IMR-90 (cell line): ENCODE measurements at regions of chr7 and their contacts with region 1.

Region 1: GRCh38 chr7:130393101-130393561 is 12.8 kb downstream of the CPA1 start:
- DNase-seq: peak; percentile 80
- ATAC-seq: peak; percentile 78
- H3K4me3 ChIP-seq: no peak overlapping the region
- H3K27ac ChIP-seq: peak overlapping the region; percentile 25; the same call in 1 of the 2 replicates
- H3K4me1 ChIP-seq: peaks cover 6% of the 10 kb centered on the region
- H3K27me3 ChIP-seq: no peaks in the 10 kb centered on the region
- CTCF ChIP-seq: no peak
- POLR2A ChIP-seq: no peak
- RAD21 ChIP-seq: no peak

Region 2: GRCh38 chr7:130352221-130353075 is 40.7 kb before region 1 on chr7:
- CTCF ChIA-PET with region 1: no interaction called
- POLR2A ChIA-PET with region 1: no interaction called
- dilution Hi-C with region 1: no loop called
- in situ Hi-C with region 1: no loop called
- intact Hi-C with region 1: no loop called
- DNase-seq: peak; percentile 75
- ATAC-seq: no peak
- H3K4me3 ChIP-seq: no peak overlapping the region
- H3K27ac ChIP-seq: peak overlapping the region; percentile 89
- H3K4me1 ChIP-seq: peaks cover 29% of the 10 kb centered on the region
- H3K27me3 ChIP-seq: no peaks in the 10 kb centered on the region
- CTCF ChIP-seq: no peak
- POLR2A ChIP-seq: no peak
- RAD21 ChIP-seq: no peak

Region 3: DNA sequence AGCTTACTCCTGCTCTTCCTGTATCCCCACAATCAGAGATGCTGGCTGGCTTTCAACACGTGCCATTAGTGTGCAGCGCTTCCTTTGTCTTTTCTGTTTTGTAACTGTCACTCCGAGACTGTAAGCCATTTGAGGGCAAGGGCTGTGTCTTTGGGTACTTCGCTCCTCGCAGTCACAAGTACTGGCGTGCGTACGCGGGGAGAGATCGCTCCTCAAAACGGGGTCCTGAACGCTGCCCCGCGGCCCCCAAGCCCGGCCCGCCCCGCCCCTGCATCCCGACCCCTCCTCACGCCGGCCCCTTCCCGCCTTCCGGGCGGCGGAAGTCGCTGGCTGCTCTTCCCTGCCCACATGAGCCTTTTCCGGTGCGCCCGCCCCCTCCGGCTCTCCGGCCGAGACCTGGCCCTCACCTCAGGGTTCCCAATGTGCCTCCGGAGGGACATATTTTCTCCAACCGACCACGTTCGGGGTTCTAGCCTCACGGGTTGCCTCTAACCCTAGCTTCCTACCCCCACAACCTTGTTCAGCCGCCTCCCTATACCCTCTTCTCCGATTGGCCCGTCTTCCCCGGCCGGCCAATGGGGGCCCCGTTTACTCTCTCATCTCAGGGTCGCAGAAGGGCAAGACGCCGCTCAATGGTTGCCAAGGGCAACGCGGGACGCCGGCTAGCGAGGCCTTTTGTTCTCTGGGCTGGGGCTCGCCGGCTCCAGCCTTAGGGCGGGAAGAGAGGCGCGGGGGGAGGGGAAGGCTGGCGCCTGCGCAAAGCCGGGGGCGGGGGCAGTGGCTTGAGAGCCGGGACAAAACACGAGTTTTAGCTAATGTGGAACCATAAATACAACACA is 47.6 kb after region 1 on chr7 and contains the start of gene CEP41:
- CTCF ChIA-PET with region 1: no interaction called
- POLR2A ChIA-PET with region 1: no interaction called
- dilution Hi-C with region 1: no loop called
- in situ Hi-C with region 1: no loop called
- intact Hi-C with region 1: no loop called
- DNase-seq: peak; percentile 96
- ATAC-seq: peak; percentile 99
- H3K4me3 ChIP-seq: peak within 1 kb of the TSS; percentile 72
- H3K27ac ChIP-seq: peak within 1 kb of the TSS; percentile 99
- H3K4me1 ChIP-seq: peaks cover 6% of the 10 kb centered on the region
- H3K27me3 ChIP-seq: no peaks in the 10 kb centered on the region
- CTCF ChIP-seq: no peak
- POLR2A ChIP-seq: no peak
- RAD21 ChIP-seq: no peak
- total RNA-seq, gene CEP41: 11.1 and 12.2 TPM in 2 replicates

Region 4: DNA sequence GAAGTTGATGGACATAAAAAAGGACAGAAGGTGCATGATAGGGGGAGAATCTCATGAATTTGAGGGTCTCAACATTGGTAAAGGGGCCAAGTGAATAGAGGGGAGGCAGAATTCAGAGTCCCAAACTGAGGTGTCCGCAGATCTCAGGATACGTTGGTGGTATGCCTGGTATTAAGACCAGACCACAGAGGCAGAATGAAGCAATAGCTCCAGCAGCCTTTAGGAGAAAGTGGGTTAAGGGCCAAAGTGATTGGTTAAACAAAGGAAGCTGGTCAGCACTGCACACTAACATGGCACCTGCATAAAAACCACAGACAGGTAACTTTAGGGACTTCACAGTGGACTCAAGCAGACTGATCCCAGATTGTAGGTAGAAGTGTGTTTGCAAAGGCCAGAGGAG is 136.3 kb after region 1 on chr7:
- CTCF ChIA-PET with region 1: no interaction called
- POLR2A ChIA-PET with region 1: interaction called, 14 read pairs
- dilution Hi-C with region 1: no loop called
- in situ Hi-C with region 1: no loop called
- intact Hi-C with region 1: no loop called
- DNase-seq: no peak
- ATAC-seq: no peak
- H3K4me3 ChIP-seq: no peak overlapping the region
- H3K27ac ChIP-seq: no peak overlapping the region
- H3K4me1 ChIP-seq: no peaks in the 10 kb centered on the region
- H3K27me3 ChIP-seq: no peaks in the 10 kb centered on the region
- CTCF ChIP-seq: no peak
- POLR2A ChIP-seq: no peak
- RAD21 ChIP-seq: no peak

Region 5: DNA sequence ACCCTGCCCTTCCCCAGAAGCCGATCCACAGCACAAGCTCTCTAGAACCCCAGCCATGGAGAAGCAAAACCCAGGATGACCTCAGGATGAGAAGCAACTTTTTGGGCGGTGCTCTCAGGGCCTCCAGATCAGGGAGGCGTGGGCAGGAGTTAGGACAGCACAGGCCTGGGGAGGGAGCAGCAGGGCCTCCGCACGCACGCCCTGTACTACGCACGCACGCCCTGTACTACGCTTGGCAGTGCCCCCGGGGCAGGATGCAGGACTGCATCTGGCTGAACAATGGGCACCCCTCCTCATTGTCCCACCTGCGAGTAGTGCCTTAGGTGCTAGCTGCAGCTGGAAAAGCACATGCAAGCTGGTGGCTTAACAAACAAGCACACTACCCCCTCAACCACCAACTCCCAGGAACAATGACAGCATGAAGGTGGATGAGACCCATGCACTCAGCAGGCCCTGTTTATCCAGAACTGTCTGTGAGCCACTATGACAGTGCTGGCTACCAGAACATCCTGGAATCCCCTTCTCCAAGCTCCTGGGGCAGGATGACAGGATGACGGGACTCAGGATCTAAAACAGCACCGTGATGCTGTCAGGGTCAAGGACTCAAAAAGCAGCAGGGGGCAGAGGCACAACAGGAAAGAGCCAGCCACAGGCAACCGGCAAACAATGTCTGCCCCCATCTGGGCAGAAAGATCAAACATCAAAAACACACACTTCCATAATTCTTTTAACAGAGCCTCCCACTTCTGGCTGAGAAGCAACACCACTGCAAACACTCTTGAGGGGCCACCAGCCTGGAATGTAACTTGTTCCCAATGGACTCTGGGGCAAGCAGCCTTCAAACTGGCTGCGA is 1151.5 kb after region 1 on chr7:
- CTCF ChIA-PET with region 1: no interaction called
- POLR2A ChIA-PET with region 1: no interaction called
- dilution Hi-C with region 1: no loop called
- in situ Hi-C with region 1: no loop called
- intact Hi-C with region 1: no loop called
- DNase-seq: peak; percentile 35
- ATAC-seq: peak; percentile 48; the same call in 1 of the 2 replicates
- H3K4me3 ChIP-seq: no peak overlapping the region
- H3K27ac ChIP-seq: no peak overlapping the region
- H3K4me1 ChIP-seq: no peaks in the 10 kb centered on the region
- H3K27me3 ChIP-seq: no peaks in the 10 kb centered on the region
- CTCF ChIP-seq: peak; percentile 51
- POLR2A ChIP-seq: no peak
- RAD21 ChIP-seq: peak; percentile 46